ENCODE measurements at regions of chr21 and their contacts with region 1.

Region 1: GRCh38 chr21:38985568-38986378 is 180.0 kb downstream of the ETS2 start:
- DNase-seq: peak; percentile 65 to 75
- ATAC-seq: peak; percentile 40 to 78 (median 66)
- H3K4me3 ChIP-seq: no peak overlapping the region
- H3K27ac ChIP-seq: peak overlapping the region; percentile 9 to 82 (median 62)
- H3K4me1 ChIP-seq: peaks cover 21 to 66% (median 64%) of the 10 kb centered on the region in 9 donors
- H3K27me3 ChIP-seq: peaks cover 0 to 5% (median 0%) of the 10 kb centered on the region in 7 donors
- CTCF ChIP-seq: no peak

Region 2: DNA sequence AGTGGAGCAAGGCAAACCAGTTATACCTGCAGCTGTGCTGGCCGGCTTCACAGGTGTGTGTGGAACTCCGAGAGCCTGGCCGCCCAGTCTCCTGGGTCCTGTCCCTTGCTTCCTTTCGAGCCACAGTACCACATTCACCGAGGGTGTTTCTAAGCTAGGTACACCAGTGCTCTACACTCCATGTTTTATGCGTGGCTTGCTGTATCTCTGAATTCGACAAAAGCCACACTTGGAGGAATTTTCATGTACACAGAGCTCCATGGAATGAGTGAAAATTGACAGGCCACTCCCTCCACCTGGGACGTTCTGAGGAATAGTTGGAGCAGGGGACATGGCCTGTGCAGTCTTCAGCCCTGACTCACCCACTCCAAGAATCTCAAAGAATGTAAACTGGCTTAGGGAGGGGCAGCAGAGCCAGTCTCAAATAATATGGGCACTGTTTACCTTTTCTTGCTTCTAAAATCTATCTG is 166.0 kb before region 1 on chr21:
- intact Hi-C with region 1: loop called in 1 of 10 experiments (anchors 5 kb)
- DNase-seq: no peak
- ATAC-seq: no peak
- H3K4me3 ChIP-seq: no peak overlapping the region
- H3K27ac ChIP-seq: peak overlapping the region in 3 of 10 donors; percentile 6 to 87 (median 27)
- H3K4me1 ChIP-seq: peaks cover 0 to 82% (median 43%) of the 10 kb centered on the region in 9 donors
- H3K27me3 ChIP-seq: no peaks in the 10 kb centered on the region
- CTCF ChIP-seq: no peak

Region 3: GRCh38 chr21:38918616-38919346 is 67.0 kb before region 1 on chr21:
- intact Hi-C with region 1: loop called in 4 of 10 experiments (anchors 2 to 5 kb)
- DNase-seq: no peak
- ATAC-seq: no peak
- H3K4me3 ChIP-seq: no peak overlapping the region
- H3K27ac ChIP-seq: peak overlapping the region in 3 of 10 donors; percentile 5 to 31 (median 17)
- H3K4me1 ChIP-seq: peaks cover under 1 to 41% (median 10%) of the 10 kb centered on the region in 9 donors
- H3K27me3 ChIP-seq: no peaks in the 10 kb centered on the region
- CTCF ChIP-seq: no peak

Region 4: DNA sequence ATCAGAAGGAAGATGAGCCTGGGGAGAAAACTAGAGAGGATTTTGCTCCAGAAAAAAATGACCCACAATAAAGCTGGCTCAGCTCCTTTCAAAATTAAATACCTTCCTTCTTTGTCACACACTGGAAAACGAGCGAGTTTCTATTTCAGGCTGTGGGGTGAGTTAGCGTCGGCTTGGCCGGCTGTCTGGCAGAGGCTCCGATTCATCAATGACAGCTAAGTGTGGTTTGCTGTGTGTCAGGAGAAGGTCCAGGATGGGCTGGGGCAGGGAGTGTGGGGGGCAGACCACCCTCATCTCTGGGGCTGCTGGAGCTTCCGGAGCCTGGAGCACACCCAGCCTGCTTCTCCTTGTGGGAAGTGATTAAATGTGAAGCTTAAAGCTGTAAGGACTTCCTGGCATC is 59.9 kb before region 1 on chr21:
- intact Hi-C with region 1: loop called in 2 of 10 experiments (anchors 5 kb)
- DNase-seq: peak; percentile 60 to 71
- ATAC-seq: peak; percentile 86 to 95 (median 89)
- H3K4me3 ChIP-seq: peak overlapping the region in 8 of 10 donors; percentile 4 to 44 (median 32)
- H3K27ac ChIP-seq: peak overlapping the region; percentile 44 to 89 (median 72)
- H3K4me1 ChIP-seq: peaks cover 6 to 33% (median 17%) of the 10 kb centered on the region in 9 donors
- H3K27me3 ChIP-seq: no peaks in the 10 kb centered on the region
- CTCF ChIP-seq: no peak

Measured in heart right ventricle (tissue), 16 donors.